ENCODE measurements at regions of chr10 and their contacts with region 1.

Region 1: GRCh38 chr10:91632671-91633550 is at the start of gene PPP1R3C:
- DNase-seq: peak; percentile 96
- total RNA-seq, gene PPP1R3C: 29.1 to 51.2 TPM

Region 2: DNA sequence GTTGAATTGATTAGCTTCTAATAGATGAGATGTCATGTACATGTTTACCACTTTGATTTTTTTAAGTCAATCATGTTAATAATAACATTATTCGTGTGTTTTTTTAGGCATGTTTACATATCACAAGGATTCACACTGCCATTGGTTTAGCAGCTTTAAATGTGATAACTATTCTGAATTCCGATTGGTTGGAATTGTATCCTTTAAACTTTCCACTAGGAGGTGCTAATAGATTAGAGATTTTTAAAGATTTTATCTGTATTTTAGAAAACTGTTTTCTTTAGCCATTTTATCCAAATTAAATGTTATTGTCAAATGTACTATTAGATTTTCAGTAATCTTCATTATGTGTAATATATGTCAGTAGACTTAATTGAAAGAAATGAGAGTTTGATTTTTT is 139.6 kb before region 1 on chr10:
- intact Hi-C with region 1: loop called in 1 of 2 experiments (anchors 5 kb)
- DNase-seq: no peak

Region 3: DNA sequence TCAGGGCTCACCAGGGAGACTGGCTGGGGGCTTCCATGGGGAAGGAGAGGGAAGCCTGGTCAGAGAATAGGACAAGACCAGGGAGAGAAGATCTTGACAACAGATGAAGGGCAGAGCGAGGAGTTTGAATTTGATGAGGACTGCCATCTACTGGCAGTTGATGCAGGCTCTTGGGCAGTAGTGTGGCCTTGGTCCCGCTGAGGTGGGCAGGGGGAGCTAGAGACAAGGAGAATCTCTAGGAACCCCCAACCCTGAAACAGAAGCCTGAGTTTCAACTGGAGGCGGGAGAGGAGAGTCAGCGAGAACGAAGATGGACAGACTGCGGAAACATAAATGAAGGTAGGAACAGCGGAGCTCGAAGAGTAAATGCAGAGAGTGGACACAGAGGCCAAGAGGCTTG is 81.1 kb before region 1 on chr10:
- intact Hi-C with region 1: loop called (anchors 2 to 5 kb)
- DNase-seq: no peak